ENCODE measurements at regions of chr22 and their contacts with region 1.

Region 1: GRCh38 chr22:38317122-38317994 is at the start of gene CSNK1E:
- DNase-seq: peak; percentile 62 to 83
- H3K4me3 ChIP-seq: peak within 1 kb of the TSS; percentile 81
- H3K4me3 Mint-ChIP-seq: peak within 1 kb of the TSS; percentile 86
- H3K27ac Mint-ChIP-seq: peak within 1 kb of the TSS; percentile 93
- H3K4me1 ChIP-seq: peaks cover 13% of the 10 kb centered on the region
- H3K4me1 Mint-ChIP-seq: no peaks in the 10 kb centered on the region
- H3K27me3 ChIP-seq: no peaks in the 10 kb centered on the region
- H3K27me3 Mint-ChIP-seq: no peaks in the 10 kb centered on the region
- CTCF ChIP-seq: no peak
- total RNA-seq, gene CSNK1E: 129 and 139 TPM in 2 replicates

Region 2: DNA sequence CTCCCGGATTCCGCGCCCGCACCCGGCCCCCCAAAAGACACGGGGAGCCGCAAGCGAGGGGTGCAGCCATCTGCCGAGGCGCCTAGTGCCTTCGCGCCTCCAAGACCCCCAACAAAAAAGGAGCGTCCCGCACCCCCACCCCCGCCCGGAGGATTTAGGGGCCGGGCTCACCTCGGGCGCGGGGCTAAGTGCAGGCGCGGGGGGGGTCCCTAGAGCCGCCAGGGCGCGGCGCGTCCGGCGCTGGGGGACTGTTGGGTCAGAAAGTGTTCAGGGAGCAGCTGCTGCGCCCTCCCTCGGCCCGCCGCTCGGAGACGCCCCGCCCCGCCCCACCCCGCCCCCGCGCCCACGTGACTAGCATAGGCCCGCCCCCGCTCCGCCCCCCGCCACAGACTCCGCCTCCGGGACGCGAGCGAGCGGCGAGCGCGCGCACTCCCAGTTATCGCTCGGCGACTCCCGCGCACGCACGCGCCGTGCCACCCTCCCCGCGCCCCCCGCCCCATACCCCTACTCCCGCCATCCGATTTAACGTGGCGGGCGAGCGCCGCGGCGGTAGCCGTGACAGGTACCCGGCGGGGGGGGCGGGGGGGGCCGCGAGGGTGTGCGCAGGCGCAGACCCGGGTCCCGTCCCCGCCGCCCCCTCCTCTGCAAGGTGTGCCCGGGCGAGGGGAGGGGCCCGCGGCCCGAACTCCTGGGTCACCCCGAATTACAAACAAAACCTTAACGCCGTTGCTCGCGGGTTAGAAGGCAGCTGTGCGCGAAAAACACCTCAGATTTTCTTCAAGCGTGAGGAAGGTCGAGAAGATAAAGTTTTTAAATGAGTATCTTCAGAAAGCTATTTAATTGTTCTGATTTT is 81.5 kb after region 1 on chr22:
- CTCF ChIA-PET with region 1: no interaction called
- POLR2A ChIA-PET with region 1: interaction called, 3 read pairs
- intact Hi-C with region 1: loop called (anchors 2 kb)
- DNase-seq: peak; percentile 89 to 92
- H3K4me3 ChIP-seq: peak overlapping the region; percentile 79
- H3K4me3 Mint-ChIP-seq: peak overlapping the region; percentile 79
- H3K27ac Mint-ChIP-seq: peak overlapping the region; percentile 83
- H3K4me1 ChIP-seq: no peaks in the 10 kb centered on the region
- H3K4me1 Mint-ChIP-seq: peaks cover 15% of the 10 kb centered on the region
- H3K27me3 ChIP-seq: no peaks in the 10 kb centered on the region
- H3K27me3 Mint-ChIP-seq: no peaks in the 10 kb centered on the region
- CTCF ChIP-seq: no peak